HEK293T (cell line): ENCODE measurements at regions of chr5 and their contacts with region 1.

Region 1: DNA sequence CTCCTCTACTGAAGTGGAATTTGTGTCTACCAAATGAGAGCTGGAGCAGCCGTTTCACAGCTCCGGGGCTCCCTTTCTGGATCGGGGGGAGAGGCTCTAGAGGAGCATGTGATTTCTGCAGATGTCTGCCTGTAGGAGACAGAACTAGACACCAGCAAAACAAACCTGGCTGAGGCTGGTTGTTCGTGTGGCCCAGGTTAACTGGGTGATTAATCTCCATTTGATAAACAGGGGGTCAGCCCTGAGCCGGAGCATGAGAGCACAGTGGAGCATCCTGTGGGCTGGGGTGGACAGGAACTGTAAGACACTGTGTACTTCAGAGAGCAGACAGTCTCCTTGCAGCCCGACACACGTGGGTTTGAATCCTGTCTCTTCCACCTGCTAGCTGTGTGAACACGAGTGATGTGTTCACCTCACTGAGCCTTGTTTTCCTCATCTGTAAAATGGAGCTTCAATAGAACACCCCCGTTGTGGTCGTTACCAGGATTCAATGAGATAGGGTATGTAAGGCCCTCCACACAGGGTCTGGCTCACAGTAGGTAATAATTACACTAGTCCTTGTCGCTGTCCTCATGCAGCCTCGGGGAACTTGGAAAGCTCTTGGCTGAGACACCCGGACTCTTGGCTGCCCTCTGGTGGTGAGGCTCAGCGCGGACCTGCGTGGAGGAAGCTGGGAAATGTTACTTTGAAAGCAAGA is 12.9 kb downstream of the CXCL14 start:
- DNase-seq: peak; percentile 79

Region 2: GRCh38 chr5:135345956-135346731 is 219.7 kb before region 1 on chr5:
- CTCF ChIA-PET with region 1: no interaction called
- POLR2A ChIA-PET with region 1: no interaction called
- DNase-seq: no peak

Region 3: DNA sequence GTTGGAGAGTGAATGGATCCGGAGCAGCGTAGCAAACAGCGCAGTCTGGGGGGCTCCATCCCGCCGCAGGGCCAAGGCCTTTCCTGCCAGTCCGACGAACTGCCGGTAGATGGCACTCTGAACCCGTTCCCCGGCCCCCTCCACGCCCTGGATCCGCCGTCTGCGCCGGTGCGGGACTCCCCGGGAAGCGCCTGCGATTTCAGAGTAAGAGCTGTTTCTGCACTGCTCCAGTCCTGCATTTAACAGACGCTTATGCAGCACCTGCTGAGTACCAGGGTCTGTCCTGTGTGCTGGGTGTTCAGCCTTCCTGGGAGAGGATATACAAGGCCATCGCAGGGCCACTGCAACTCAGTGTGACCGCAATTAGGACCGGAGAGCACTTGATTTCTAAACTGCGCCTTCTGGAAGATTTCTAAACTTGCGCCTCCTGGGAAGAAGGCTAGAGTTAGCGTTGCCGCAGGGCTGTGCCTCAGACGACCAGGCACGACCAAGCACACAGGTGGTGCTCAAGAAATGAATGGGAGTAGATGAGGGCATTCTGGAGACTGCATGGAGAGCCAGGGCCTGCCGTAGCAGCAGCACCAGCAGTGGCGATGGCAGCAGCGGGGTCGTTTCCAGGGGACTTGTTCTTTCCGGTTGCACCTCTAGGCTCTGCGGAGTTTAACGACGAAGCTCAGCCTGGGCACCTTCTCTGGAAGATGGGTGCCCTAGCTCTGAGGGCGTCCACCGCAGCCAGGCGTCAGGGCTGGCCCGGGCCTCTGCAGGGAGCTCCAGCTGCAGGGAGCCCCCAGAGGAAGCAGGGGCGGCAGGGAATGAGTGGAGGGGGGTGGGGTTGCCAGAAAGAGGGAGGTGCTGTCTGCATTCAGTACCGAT is 99.5 kb before region 1 on chr5:
- CTCF ChIA-PET with region 1: interaction called, 102 read pairs
- POLR2A ChIA-PET with region 1: interaction called, 4 read pairs
- DNase-seq: peak; percentile 88

Region 4: DNA sequence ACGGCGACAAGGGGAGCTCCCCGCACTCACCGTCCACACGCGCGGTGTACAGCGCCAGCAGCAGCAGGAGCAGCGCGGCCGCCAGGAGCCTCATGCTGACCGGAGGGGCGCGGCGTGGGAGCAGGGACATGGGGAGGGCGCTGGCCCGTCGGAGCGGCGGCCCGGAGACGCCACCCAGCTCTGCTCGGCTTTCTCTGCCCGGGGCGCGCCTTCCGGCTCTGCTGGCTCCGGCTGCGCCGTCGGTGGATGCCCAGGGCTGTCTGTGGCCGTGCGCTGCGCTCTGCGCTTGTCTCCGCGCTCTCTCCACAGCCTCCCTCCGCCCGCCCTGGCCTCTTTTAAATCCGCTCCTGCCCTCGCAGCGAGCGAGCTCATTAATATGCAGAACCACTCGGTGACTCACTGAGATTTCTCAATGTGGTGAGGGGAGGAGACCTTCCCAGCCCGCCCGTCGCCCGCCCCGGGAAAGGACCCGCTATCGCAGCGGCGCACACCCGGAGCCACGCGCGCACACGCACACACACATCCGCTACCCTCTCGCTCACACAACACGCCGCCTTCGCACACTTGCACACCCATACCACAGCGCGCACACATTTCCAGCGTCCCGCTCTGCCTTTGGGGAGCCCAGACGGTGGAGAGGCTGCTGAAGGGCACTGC is 12.9 kb after region 1 on chr5 and contains the start of gene CXCL14:
- CTCF ChIA-PET with region 1: interaction called, 37 read pairs
- POLR2A ChIA-PET with region 1: interaction called, 3 read pairs
- DNase-seq: no peak

Region 5: DNA sequence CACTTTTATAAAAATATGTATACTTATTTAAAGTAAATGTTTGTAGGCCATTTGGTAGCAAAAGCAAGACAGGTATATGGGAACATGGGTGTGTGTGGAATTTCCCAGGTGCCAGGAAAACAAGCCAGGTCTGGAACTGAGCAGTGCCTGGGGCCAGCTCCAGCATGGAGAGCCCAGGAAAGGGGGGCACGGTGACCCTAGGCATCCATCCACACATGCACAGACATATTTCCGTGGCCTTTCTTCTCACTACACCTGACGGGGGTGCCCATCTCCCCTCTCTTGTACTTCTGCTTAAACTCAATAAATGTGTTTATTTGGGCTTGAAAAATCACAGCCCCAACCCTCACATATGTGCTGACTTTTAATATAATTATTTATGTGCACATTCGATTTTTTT is 44.1 kb after region 1 on chr5:
- CTCF ChIA-PET with region 1: no interaction called
- POLR2A ChIA-PET with region 1: no interaction called
- DNase-seq: no peak

Region 6: GRCh38 chr5:135655468-135655815 is 89.6 kb after region 1 on chr5:
- CTCF ChIA-PET with region 1: no interaction called
- POLR2A ChIA-PET with region 1: no interaction called
- DNase-seq: no peak

Region 7: GRCh38 chr5:135829681-135830383 is 264.0 kb after region 1 on chr5:
- CTCF ChIA-PET with region 1: interaction called, 38 read pairs
- POLR2A ChIA-PET with region 1: no interaction called
- DNase-seq: peak; percentile 82